Left colon (tissue), 2 donors: ENCODE measurements at regions of chr3 and their contacts with region 1.

Region 1: DNA sequence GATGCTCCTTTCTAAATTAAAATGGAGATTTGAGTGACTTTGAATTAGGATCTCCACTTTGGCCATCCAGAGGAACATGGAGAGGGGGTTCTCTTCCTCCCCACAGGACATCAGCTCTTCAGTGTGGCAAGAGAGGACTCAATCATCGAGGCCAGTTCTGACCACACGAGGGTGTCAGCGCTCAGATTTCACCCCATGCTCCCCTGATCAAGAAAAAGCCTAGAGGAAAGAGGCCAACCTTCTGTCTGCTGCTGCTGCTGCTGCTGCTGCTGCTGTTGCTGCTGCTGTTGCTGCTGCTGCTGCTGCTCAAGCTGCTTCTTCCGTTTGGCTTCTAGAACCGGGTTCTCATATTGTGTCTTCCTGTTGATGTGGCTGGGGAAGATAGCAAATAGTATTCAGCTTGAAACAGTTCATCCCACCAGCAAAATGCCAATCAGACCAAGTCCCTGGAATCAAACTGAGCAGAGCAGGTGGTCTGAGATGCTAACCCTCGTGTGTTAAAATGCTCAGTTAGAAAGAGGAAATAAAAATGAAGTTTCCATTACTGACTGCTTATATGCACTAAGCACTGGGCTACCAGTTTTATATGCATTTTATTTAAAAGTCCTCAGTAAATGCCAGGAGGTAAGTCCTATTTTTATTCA is 599.0 kb downstream of the MAGI1 start:
- DNase-seq: peak in 1 of 2 donors; percentile 45
- ATAC-seq: peak; percentile 90

Region 2: DNA sequence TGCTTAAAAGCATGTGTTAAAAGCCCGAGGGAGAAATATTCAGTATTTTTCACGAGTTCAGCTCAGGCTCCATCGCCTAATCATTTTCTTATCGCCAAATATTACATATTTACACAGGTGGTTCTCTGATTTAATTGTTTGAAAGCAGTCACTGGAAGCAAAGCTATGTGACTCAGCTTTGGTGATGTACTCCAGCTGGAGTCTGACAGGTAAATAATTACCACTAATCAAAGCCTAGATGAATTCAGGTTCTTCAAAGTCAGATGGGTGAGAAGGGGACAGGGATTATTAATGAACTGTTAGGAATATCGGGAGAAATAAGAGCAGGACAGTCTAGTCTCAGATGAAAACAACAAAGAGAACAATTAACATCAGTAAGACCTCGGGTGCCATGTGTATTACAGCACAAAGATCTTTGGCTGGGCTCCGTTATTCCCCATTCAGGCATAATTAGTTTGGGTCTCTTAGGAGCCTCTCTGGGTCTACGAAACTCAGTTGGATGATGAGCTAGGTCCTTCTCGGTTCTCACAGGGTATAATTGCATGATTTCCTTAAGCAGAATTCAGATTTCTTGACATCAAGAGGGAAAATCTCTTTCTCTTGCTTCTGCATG is 420.2 kb before region 1 on chr3:
- intact Hi-C with region 1: no loop called
- DNase-seq: no peak
- ATAC-seq: no peak

Region 3: DNA sequence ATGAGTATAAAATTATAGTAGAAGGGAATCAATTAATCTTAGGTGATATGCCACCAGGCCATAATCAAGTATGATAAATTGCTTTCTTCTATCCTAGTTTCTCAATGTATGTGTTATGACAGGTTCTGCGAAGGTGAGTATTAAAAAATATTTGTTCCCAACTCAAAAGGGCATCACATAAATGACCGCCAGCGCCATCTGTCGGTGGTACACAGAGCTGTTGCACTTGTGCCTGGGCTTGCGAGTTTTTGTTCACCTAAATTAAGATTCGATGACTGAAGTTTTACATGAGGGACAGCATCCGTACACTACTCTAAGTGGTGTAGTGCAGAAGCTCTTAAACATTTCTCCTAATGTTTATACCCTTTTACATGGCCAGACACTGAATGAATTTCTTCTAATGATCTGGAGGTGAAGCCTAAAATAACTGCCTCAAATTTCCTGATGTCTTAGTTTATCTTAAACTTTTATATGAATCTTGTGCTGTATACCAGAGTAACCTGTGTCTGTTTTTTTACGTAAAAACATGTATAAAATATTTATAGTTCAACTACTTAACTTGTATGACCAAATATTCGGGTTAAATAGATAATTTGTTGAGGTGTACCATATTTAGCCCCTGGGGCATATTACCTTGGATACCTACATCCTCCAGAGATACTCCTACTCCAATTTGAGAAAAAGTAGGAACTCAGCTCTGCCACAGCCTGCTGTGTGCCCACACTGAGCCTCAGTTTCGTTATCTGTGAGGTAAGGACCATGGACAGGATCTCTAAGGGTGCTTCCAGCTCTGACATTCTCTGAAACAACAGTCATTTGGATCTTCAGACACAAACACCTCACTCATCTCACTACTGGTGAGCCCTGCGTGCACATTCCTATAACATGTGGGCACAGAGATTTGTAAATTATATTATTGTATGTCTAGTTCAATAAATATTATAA is 233.4 kb after region 1 on chr3:
- intact Hi-C with region 1: loop called in 1 of 2 experiments (anchors 10 kb)
- DNase-seq: peak; percentile 25 to 70
- ATAC-seq: peak; percentile 55